Activated T-helper 2 cell treated with anti-CD3 and anti-CD28 coated beads, Interferon-gamma antibody, Interleukin-2, Interleukin-4, amounts not matched to agents 10 μg/mL and 5 μg/mL and 100 μg/mL, durations not matched to agents 14 hours and 24 hours and 36 hours (primary cell): ENCODE measurements at regions of chr1 and their contacts with region 1.

Region 1: GRCh38 chr1:50605186-50605875 is 182.1 kb upstream of the DMRTA2 start:
- DNase-seq: no peak
- H3K4me3 Mint-ChIP-seq: no peak overlapping the region
- H3K27ac Mint-ChIP-seq: no peak overlapping the region
- H3K4me1 Mint-ChIP-seq: no peaks in the 10 kb centered on the region
- H3K27me3 Mint-ChIP-seq: no peaks in the 10 kb centered on the region

Region 2: DNA sequence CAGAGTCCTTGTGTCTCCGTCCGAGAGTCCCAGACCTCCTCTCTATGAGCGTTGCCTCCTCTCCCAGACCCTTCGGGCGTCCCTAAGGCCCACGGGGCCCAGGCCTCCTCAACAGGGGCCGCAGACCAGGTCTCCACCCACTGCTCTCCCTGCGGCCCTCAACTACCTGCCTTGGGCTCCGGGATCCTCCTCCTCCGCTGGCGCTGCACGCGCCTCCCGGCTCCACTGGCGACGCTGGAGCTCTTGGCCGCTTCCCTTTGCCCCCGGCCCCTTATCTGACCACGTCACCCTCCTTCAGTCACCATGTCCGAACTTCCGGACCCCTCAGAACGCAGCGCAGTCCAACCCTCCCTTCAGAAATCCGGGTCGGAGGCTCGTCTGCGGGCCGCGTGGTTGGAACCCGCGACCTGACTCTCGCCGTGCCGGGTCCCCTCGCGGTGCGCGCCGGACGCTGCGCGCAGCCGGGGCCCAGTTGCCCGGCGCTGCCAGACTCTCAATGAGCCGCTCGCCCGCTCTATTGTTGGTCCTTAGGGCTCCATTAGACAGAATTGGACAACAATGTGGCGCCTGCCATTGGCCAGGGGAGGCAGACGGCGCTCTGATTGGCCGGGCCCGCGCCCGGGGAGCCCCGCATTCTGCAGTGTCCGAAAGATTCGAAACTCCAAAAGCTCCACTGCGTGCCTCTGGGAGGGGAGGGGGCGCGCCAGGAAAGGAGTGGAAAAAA is 182.2 kb before region 1 on chr1 and contains the start of gene DMRTA2:
- intact Hi-C with region 1: loop called (anchors 5 kb)
- DNase-seq: no peak
- H3K4me3 Mint-ChIP-seq: peak within 1 kb of the TSS; percentile 68
- H3K27ac Mint-ChIP-seq: peak within 1 kb of the TSS; percentile 65
- H3K4me1 Mint-ChIP-seq: peaks cover 26% of the 10 kb centered on the region
- H3K27me3 Mint-ChIP-seq: peaks cover 78% of the 10 kb centered on the region
- total RNA-seq, gene DMRTA2: not detected in 2 replicates

Region 3: GRCh38 chr1:50559421-50559820 is 45.9 kb before region 1 on chr1:
- intact Hi-C with region 1: no loop called
- DNase-seq: no peak
- H3K4me3 Mint-ChIP-seq: no peak overlapping the region
- H3K27ac Mint-ChIP-seq: no peak overlapping the region
- H3K4me1 Mint-ChIP-seq: peaks cover 1% of the 10 kb centered on the region
- H3K27me3 Mint-ChIP-seq: no peaks in the 10 kb centered on the region